Activated CD4-positive, alpha-beta T cell treated with anti-CD3 and anti-CD28 coated beads, Interleukin-2, amount 10 ng/mL, durations not matched to agents 24 days and 14 days (primary cell): ENCODE measurements at regions of chr9 and their contacts with region 1.

Region 1: GRCh38 chr9:98056269-98057137 is at the start of gene NANS:
- DNase-seq: peak; percentile 98
- H3K4me3 Mint-ChIP-seq: peak within 1 kb of the TSS; percentile 93
- H3K27ac Mint-ChIP-seq: peak within 1 kb of the TSS; percentile 97
- H3K4me1 Mint-ChIP-seq: peaks cover 33% of the 10 kb centered on the region
- H3K27me3 Mint-ChIP-seq: no peaks in the 10 kb centered on the region
- total RNA-seq, gene NANS: 54.0 and 57.1 TPM in 2 replicates

Region 2: DNA sequence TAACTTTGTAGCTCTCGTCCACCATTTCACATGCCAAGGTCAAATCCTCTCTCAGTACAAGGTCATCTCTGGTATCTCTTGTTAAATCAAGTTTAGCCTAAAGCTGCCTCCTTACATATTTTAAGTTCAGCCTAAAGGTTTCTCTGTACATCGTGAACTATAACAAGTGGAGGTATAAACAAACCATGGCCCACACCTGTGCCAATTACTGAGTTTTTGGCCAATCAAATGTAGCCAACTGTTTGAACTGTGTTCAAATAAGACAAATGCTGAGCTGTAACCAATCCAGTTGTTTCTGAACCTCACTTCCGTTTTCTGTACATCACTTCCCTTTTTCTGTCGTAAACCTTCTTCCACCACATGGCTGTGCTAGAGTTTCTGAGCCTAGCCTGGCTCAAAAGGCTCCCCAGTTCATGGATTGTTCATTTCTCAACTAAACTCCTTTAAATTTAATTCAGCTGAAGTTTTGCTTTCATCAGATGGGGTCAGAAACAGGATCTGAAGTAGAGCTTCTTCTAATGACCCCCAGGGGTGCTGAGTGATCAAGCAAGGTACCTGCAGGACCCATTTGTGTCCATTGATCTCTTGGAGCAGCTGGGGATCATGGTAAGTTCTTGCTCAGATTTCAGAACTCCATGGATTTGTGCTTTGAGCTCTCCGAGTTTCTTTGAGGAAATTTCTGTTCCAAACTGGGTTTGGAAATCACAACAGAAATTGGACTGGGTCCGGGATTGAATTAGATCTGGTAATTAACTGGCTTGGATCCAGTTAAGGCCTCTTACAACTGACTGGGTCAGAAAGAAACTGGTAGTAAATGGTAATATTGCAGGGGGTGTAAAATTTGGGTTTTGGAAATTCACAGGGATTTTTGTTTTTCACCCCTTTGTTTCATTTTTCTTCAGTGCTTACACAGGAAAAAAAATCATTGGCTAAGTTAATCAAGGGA is 11.0 kb before region 1 on chr9:
- intact Hi-C with region 1: loop called (anchors 1 kb)
- DNase-seq: peak; percentile 87
- H3K4me3 Mint-ChIP-seq: peak overlapping the region; percentile 87
- H3K27ac Mint-ChIP-seq: peak overlapping the region; percentile 86
- H3K4me1 Mint-ChIP-seq: peaks cover 28% of the 10 kb centered on the region
- H3K27me3 Mint-ChIP-seq: no peaks in the 10 kb centered on the region

Region 3: GRCh38 chr9:98101868-98102273 is 45.4 kb after region 1 on chr9:
- intact Hi-C with region 1: loop called (anchors 2 kb)
- DNase-seq: peak; percentile 95
- H3K4me3 Mint-ChIP-seq: peak overlapping the region; percentile 80
- H3K27ac Mint-ChIP-seq: peak overlapping the region; percentile 93
- H3K4me1 Mint-ChIP-seq: peaks cover 73% of the 10 kb centered on the region
- H3K27me3 Mint-ChIP-seq: no peaks in the 10 kb centered on the region

Region 4: DNA sequence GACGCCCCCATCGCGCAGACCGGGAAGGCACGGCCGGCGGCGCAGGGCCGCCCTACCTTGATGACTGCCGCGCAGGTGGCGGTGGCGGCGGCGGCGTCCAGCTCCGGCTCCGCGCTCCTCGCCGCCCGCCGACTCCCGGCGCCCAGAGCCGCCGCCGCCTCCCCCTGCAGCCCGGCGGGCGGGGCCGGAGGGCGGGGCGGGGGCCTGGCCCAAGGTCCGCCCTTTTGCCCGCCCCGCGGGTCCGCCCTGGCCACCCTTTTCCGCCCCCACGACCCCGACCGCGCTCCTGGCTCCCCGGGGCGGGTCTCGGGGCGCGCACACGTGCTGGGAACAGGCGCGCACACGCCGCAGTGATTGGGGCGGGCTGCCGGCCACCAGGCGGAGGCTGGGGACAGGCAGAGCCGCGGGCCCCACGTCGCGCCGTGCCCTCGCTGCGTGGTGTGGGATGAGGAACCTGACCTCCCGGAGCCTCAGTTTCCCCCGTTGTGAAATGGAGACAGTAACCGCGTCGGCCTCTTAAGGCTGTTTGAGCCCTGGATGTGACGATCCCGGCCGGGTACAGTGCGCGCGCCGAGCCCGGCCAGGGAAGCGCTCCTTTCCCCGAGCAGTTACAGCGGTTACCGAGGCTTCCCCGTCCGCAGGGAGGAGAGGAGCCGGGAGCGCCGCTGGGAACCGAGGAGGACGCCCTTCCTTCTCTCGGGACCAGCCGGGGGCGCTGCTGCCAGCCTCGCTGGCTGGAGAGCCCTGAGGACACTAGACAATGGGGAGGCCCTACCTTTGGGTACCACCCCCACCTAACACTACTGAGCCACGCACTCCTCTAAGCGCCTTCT is 136.2 kb after region 1 on chr9 and contains the start of gene CORO2A:
- intact Hi-C with region 1: loop called (anchors 5 kb)
- DNase-seq: peak; percentile 93
- H3K4me3 Mint-ChIP-seq: peak within 1 kb of the TSS; percentile 83
- H3K27ac Mint-ChIP-seq: peak within 1 kb of the TSS; percentile 65
- H3K4me1 Mint-ChIP-seq: peaks cover 10% of the 10 kb centered on the region
- H3K27me3 Mint-ChIP-seq: peaks cover 7% of the 10 kb centered on the region
- total RNA-seq, gene CORO2A: 0.92 and 1.4 TPM in 2 replicates